ENCODE measurements at regions of chr11 and their contacts with region 1.

Region 1: GRCh38 chr11:94741022-94741679 is 27.0 kb upstream of the AMOTL1 start:
- H3K4me3 ChIP-seq: peak overlapping the region; percentile 68
- H3K27ac ChIP-seq: peak overlapping the region; percentile 34; the same call in 1 of the 2 replicates
- H3K4me1 ChIP-seq: peaks cover 9% of the 10 kb centered on the region
- CTCF ChIP-seq: peak; percentile 23; the same call in 1 of the 2 replicates

Region 2: GRCh38 chr11:94757037-94757735 is 16.0 kb after region 1 on chr11:
- CTCF ChIA-PET with region 1: interaction called, 12 read pairs
- POLR2A ChIA-PET with region 1: interaction called, 5 read pairs
- H3K4me3 ChIP-seq: no peak overlapping the region
- H3K27ac ChIP-seq: no peak overlapping the region
- H3K4me1 ChIP-seq: no peaks in the 10 kb centered on the region; the same call in 1 of the 2 replicates
- CTCF ChIP-seq: no peak

Region 3: DNA sequence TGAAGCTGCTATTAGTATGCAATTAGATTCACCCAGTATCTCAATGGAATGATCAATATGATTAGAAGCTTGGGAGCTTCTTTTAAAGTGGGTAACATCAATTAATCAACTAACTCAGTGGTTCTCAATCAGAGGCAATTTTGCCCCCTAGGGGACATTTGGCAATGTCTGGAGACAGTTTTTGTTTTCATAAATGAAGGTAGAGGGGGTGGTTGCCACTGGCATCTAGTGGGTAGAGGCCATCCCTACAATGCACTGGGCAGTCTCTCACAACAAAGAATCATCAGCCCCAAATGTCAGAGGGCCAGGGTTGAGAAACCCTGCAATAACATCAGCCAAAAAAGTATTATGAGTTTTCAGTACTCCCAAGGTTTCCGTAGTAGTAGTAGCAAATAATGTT is 21.1 kb after region 1 on chr11:
- CTCF ChIA-PET with region 1: interaction called, 12 read pairs
- POLR2A ChIA-PET with region 1: interaction called, 4 read pairs
- H3K4me3 ChIP-seq: no peak overlapping the region
- H3K27ac ChIP-seq: no peak overlapping the region
- H3K4me1 ChIP-seq: no peaks in the 10 kb centered on the region
- CTCF ChIP-seq: peak; percentile 27; the same call in 1 of the 2 replicates

Region 4: GRCh38 chr11:94809251-94809650 is 68.1 kb after region 1 on chr11:
- CTCF ChIA-PET with region 1: no interaction called
- POLR2A ChIA-PET with region 1: no interaction called
- H3K4me3 ChIP-seq: no peak overlapping the region
- H3K27ac ChIP-seq: no peak overlapping the region
- H3K4me1 ChIP-seq: no peaks in the 10 kb centered on the region
- CTCF ChIP-seq: no peak

Measured in HEK293 (cell line).